ENCODE measurements at regions of chr2 and their contacts with region 1.

Region 1: DNA sequence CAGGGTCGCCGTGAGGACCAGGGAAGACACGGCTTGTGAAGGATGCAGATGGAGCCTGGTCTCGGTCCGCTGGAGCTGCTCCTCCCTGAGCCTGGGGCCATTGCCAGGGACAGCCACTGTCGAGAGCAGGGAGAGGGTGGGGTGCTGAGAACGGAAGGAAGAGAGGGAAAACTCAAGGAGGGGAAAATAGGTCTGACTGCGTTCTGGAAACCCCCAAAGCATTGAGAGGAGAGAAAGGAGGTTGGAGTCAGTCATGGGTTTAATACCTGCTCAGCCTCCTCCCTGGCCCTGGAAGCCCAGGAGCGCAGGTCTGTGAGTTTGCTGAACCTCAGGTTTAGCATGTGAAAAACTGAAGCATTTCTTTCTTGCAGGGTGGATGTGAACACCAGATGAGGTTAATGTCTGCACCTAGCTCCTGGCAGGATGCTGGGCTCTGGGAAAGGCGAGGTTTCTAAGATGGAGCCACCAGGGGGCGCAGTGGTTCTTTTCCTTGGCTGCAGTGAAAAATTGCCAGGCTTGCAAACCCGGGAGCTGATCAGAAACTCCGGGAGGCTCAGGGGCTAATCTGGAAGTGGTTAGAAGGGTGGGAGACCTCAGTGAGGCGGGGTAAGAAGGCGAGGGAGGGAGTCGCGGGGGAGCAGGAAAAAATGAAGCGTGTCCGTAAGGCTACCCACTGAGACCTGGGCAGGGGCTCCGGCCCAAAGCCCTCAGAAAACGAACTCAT is 33.6 kb upstream of the RNF149 start:
- H3K4me3 ChIP-seq: no peak overlapping the region
- H3K27ac ChIP-seq: no peak overlapping the region
- H3K4me1 ChIP-seq: no peaks in the 10 kb centered on the region
- CTCF ChIP-seq: peak; percentile 31; the same call in 1 of the 2 replicates

Region 2: GRCh38 chr2:101330253-101330933 is 11.7 kb before region 1 on chr2:
- CTCF ChIA-PET with region 1: interaction called, 32 read pairs
- POLR2A ChIA-PET with region 1: no interaction called
- H3K4me3 ChIP-seq: no peak overlapping the region
- H3K27ac ChIP-seq: no peak overlapping the region
- H3K4me1 ChIP-seq: no peaks in the 10 kb centered on the region
- CTCF ChIP-seq: no peak

Region 3: DNA sequence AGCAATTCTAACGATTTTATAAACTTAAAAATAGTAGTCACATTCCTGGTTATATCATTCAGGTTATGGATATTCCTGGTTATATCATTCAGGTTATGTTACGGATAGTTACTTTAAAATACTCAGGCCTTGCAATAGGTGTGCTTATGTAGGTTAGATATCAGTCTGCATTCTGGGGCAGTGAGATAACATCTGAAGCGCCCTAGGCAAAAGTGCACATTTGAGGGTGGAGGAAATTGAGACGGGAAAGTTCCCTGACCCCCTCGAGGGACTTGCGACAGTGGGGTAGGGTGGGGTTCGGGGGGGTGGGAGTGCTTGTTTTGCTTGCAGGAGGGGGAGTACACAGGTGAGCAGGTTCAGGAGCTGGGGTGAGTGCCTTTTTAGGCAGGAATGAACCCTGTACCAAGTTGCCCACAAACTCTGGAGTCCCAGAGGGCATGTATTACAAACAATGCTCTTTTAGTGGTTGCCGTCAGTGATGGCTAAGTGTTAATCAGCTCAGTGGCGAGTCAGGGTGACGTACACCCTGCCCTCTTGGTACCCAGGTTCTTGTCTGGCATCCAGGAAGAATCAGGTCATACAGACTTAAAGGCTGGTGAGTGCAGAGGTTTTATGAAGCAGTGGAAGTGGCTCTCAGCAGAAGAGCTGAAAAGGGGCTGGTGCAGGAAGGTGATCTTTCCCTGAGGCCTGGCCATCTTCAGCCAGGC is 13.5 kb after region 1 on chr2:
- CTCF ChIA-PET with region 1: interaction called, 14 read pairs
- POLR2A ChIA-PET with region 1: no interaction called
- H3K4me3 ChIP-seq: no peak overlapping the region
- H3K27ac ChIP-seq: no peak overlapping the region
- H3K4me1 ChIP-seq: no peaks in the 10 kb centered on the region
- CTCF ChIP-seq: no peak

Region 4: DNA sequence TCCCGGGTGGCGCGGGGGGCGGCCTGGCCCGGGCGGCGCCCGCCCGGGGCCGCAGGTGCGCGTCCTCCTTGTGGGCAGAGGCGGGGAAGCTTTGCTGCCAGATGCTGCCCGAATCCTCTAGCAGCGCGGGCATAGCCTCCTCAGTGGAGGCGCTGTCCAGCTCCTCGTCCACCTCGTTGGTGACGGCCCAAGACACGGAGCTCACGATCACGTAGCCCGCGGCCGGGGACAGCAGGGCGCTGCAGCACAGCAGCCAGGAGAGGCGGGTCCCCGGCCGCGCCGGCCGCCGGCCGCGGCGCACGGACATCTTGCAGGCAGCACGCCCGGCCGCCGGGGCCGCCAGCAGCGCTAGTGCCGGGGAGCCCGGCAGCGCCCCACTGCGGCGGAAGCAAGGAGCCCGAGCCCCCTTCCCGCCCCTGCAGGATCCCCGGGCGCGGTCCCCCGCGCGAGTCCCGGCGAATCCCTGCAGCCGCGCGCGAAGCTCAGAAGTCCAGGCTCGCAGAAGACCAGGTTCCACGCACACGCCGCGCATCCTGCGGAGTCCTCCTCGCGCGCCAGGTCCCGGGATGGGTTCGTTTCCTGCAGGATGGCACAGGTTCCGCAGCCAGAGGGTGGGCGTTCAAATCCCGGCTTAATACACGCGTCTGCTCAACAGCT is 45.2 kb after region 1 on chr2 and contains the start of gene CREG2:
- CTCF ChIA-PET with region 1: interaction called, 21 read pairs
- POLR2A ChIA-PET with region 1: no interaction called
- H3K4me3 ChIP-seq: peak within 1 kb of the TSS; percentile 69
- H3K27ac ChIP-seq: no peak within 1 kb of the TSS; the same call in 1 of the 2 replicates
- H3K4me1 ChIP-seq: no peaks in the 10 kb centered on the region
- CTCF ChIP-seq: peak; percentile 69; the same call in 1 of the 2 replicates

Region 5: GRCh38 chr2:101419096-101419663 is 77.1 kb after region 1 on chr2:
- CTCF ChIA-PET with region 1: interaction called, 16 read pairs
- POLR2A ChIA-PET with region 1: no interaction called
- H3K4me3 ChIP-seq: no peak overlapping the region
- H3K27ac ChIP-seq: no peak overlapping the region
- H3K4me1 ChIP-seq: no peaks in the 10 kb centered on the region
- CTCF ChIP-seq: 0 out of 2 replicates have a peak, but pooled peaks have one; percentile 13

Region 6: DNA sequence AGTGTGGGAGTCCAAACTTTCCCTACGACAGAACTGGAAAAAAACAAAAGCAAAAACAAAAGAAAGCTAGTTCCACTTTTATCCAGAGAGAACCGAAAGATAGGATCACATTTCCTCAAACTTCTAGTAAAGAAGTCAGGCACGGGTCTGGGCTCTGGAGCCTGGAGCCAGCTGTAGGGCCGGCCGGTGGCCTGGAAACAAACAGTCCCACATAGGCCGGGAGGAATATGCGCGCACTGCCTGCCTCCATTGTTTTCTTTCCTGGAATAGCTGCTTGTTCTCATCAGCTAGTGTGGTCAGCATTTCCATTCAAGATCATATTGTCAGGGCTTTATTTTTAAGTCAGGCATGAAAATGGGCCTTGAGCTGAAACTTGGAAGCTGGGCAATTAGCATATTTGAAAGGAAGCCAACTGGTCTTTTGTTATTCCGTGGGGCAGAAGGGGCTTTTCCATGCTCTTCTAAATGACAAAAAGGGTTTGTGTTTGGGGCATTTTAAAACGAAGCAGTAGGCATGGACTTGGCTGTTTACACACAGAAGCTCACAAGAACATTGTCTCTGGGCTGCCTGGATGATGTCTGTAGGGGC is 191.6 kb after region 1 on chr2:
- CTCF ChIA-PET with region 1: no interaction called
- POLR2A ChIA-PET with region 1: no interaction called
- H3K4me3 ChIP-seq: no peak overlapping the region
- H3K27ac ChIP-seq: no peak overlapping the region
- H3K4me1 ChIP-seq: no peaks in the 10 kb centered on the region
- CTCF ChIP-seq: no peak

Measured in HEK293 (cell line).